Upper lobe of right lung (tissue), 1 donor: ENCODE measurements at regions of chr1 and their contacts with region 1.

Region 1: DNA sequence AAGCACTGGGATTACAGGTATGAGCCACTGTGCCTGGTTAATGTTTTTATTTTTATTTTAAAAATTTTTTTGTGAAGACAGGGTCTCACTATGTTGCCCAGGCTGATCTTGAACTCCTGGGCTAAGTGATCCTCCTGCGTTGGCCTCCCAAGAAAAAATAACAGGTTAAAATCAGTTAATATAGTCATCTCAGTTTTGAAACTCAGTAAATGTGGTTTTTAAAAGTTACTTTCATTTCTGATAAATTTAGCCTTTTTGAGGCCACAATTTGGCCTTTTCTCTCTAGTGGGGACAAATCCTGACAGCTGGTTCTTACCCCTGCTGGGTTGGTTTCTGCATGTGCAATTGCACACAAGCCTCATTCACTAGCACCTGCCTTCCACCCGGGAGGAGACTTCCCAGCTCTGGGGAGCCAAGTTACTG is 13.3 kb downstream of the PMF1 start:
- DNase-seq: no peak
- ATAC-seq: no peak
- H3K4me3 ChIP-seq: no peak overlapping the region
- H3K27ac ChIP-seq: no peak overlapping the region
- H3K4me1 ChIP-seq: peaks cover 3% of the 10 kb centered on the region
- H3K27me3 ChIP-seq: no peaks in the 10 kb centered on the region
- CTCF ChIP-seq: no peak

Region 2: GRCh38 chr1:156090822-156091188 is 135.3 kb before region 1 on chr1:
- intact Hi-C with region 1: loop called (anchors 5 kb)
- DNase-seq: peak; percentile 92
- ATAC-seq: peak; percentile 92
- H3K4me3 ChIP-seq: no peak overlapping the region
- H3K27ac ChIP-seq: no peak overlapping the region
- H3K4me1 ChIP-seq: peaks cover 3% of the 10 kb centered on the region
- H3K27me3 ChIP-seq: no peaks in the 10 kb centered on the region
- CTCF ChIP-seq: peak; percentile 86

Region 3: DNA sequence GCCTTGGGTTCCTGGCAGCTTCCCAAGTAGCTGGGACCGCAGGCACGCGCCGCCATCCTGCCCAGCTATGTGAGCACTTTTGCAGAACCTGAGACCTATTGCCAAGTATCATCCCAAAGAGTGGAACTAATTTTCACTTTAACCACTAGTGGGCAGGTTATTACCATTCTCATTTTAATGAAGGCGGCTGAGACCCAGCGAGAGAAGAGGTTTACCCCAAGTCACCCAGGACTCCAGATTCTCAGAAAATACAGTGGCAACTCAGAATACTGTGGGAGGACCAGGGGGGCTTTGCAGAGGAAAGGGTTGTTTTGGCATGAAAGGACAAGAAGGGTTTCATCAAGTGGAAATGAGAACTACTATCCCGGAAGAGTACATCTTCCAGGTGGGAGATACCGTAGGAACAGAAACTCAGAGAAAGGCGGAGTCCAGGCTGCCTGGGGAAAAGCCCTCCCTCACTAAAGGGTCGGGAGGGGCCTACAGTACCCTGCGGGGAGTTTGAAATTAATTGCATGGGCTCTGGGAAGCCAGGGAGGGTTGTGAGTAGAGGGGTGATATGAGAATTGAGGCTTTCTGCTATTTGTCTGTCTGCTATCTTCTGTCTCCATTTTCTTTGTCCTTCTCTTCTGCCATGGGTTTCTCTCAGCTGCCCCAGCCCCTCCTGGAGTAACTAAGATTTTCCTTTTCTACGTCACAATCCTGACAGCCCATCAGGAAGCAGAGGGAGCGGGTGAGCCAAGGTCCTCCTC is 79.9 kb before region 1 on chr1:
- intact Hi-C with region 1: loop called (anchors 10 kb)
- DNase-seq: peak; percentile 83
- ATAC-seq: peak; percentile 85
- H3K4me3 ChIP-seq: no peak overlapping the region
- H3K27ac ChIP-seq: peak overlapping the region; percentile 11
- H3K4me1 ChIP-seq: peaks cover 27% of the 10 kb centered on the region
- H3K27me3 ChIP-seq: no peaks in the 10 kb centered on the region
- CTCF ChIP-seq: peak; percentile 75